Endothelial cell of umbilical vein (primary cell): ENCODE measurements at regions of chr10 and their contacts with region 1.

Region 1: GRCh38 chr10:80453701-80454513 is at the start of gene TSPAN14:
- DNase-seq: peak; percentile 83
- H3K4me3 ChIP-seq: peak within 1 kb of the TSS; percentile 80 to 87 (median 83)
- H3K27ac ChIP-seq: peak within 1 kb of the TSS; percentile 86
- H3K4me1 ChIP-seq: peaks cover 40% of the 10 kb centered on the region
- H3K27me3 ChIP-seq: no peaks in the 10 kb centered on the region
- CTCF ChIP-seq: peak in 1 of 2 donors; percentile 3
- POLR2A ChIP-seq: peak; percentile 76
- total RNA-seq, gene TSPAN14: 237 and 242 TPM in 2 replicates

Region 2: GRCh38 chr10:80324086-80324485 is 129.8 kb before region 1 on chr10:
- CTCF ChIA-PET with region 1: no interaction called
- POLR2A ChIA-PET with region 1: no interaction called
- dilution Hi-C with region 1: no loop called
- intact Hi-C with region 1: no loop called
- DNase-seq: peak; percentile 12
- H3K4me3 ChIP-seq: no peak overlapping the region
- H3K27ac ChIP-seq: no peak overlapping the region
- H3K4me1 ChIP-seq: no peaks in the 10 kb centered on the region
- H3K27me3 ChIP-seq: peaks cover 5 to 7% of the 10 kb centered on the region in 2 experiments
- CTCF ChIP-seq: no peak
- POLR2A ChIP-seq: no peak

Region 3: DNA sequence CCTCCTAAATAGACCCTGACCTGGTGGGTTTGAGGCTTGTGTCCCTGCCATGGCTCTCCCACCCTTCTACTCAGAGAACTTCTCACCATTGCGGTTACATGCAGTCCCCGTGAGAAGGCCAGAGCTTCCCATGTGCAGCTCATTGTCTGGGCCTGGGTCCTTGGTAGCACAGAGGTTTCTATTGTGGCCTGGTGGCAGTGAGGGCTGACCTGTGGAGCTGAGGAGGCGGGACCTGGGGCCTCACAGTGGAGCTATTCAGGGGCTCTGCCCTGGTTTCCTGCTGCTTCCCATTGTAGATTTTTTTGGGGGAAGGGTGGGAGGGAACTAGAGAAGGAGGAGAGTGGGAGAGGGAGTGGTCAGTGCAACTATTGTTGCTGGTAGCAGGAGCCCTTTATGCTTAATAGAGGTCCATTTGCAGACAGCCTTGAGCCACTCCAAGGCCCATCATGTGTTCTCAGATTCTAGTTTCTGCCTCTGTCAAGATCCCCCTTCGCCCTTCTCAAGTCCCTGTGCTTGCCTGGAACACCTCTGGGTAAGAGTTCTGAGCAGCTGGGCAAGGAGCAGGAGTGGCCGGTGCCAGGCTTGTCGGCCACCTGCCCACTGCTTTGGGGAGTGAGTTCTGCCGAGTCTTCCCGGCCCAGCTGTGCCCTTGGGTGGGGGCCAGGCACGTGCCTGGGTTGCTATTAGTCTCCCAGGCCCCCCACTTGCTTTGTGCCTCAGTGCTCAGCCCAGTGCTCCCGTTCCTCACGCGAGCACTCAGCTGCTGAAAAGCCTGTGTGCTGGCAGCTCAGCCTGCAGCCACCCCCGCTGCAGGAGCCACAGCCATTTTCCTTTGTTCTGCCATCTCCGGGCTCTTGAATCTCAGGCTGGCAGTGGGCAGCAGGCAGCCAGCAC is 10.9 kb after region 1 on chr10:
- CTCF ChIA-PET with region 1: interaction called, 4 read pairs
- POLR2A ChIA-PET with region 1: interaction called, 5 read pairs
- dilution Hi-C with region 1: no loop called
- intact Hi-C with region 1: loop called (anchors 1 kb)
- DNase-seq: peak; percentile 78
- H3K4me3 ChIP-seq: peak overlapping the region in 2 of 3 experiments; percentile 13 to 23
- H3K27ac ChIP-seq: peak overlapping the region; percentile 79
- H3K4me1 ChIP-seq: peaks cover 97% of the 10 kb centered on the region
- H3K27me3 ChIP-seq: no peaks in the 10 kb centered on the region
- CTCF ChIP-seq: no peak
- POLR2A ChIP-seq: peak; percentile 37

Region 4: GRCh38 chr10:80964955-80965614 is 511.2 kb after region 1 on chr10:
- CTCF ChIA-PET with region 1: no interaction called
- POLR2A ChIA-PET with region 1: no interaction called
- dilution Hi-C with region 1: no loop called
- intact Hi-C with region 1: no loop called
- DNase-seq: no peak
- H3K4me3 ChIP-seq: no peak overlapping the region
- H3K27ac ChIP-seq: no peak overlapping the region
- H3K4me1 ChIP-seq: no peaks in the 10 kb centered on the region
- H3K27me3 ChIP-seq: no peaks in the 10 kb centered on the region
- CTCF ChIP-seq: no peak
- POLR2A ChIP-seq: no peak